Kidney (tissue), 22 donors: ENCODE measurements at regions of chr6 and their contacts with region 1.

Region 1: GRCh38 chr6:29028821-29029220 is 16.2 kb downstream of the OR2W1 start:
- DNase-seq: no peak
- H3K4me3 ChIP-seq: no peak overlapping the region
- H3K27ac ChIP-seq: no peak overlapping the region
- H3K4me1 ChIP-seq: no peaks in the 10 kb centered on the region
- H3K27me3 ChIP-seq: no peaks in the 10 kb centered on the region
- CTCF ChIP-seq: no peak

Region 2: GRCh38 chr6:28838634-28839442 is 190.0 kb before region 1 on chr6:
- intact Hi-C with region 1: loop called (anchors 10 kb)
- DNase-seq: peak; percentile 87 to 91 (median 88)
- H3K4me3 ChIP-seq: peak overlapping the region; percentile 74 to 99 (median 92)
- H3K27ac ChIP-seq: peak overlapping the region; percentile 11 to 20
- H3K4me1 ChIP-seq: peaks cover 0 to 6% (median 2%) of the 10 kb centered on the region in 3 donors
- H3K27me3 ChIP-seq: peaks cover 10% of the 10 kb centered on the region
- CTCF ChIP-seq: peak; percentile 48